Ascending aorta (tissue), 2 donors: ENCODE measurements at regions of chr10 and their contacts with region 1.

Region 1: DNA sequence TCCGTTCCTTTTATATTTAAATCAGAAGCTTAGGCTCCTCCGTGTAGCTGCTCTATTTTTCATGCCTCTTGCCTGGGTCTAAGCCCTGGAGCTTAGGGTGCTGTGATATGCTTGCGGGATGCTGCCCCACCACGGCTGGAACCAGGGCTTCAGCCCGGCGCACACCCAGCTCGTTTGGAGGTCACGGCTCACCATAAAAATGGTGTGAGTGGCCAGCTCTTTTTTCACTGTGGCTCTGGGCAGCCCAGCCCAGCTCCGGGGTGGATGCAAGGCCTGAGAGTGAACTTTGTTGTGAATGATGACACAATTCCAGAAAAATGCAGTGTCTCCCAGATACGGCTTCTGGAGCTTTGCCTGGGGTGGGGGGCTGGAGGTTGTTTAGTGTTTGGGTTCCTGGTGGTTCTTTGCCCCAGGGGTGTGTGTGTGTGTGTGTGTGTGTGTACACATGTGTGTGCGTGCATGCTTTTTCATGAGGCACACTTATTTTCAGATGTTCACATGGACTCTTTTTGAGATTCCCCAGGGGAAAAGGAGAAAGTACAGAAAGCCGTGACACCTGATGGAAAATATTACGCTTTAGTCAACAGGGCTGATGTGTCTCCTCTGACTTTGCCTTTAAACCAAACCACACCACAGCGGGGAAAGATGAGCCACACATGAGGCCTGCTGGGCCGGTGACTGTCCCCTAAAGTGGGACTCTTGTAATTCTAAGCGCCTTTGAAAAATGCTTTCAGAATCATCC is 46.2 kb downstream of the GRK5 start:
- DNase-seq: peak; percentile 47 to 90
- H3K4me3 ChIP-seq: peak overlapping the region in 1 of 2 donors; percentile 33
- H3K27ac ChIP-seq: peak overlapping the region; percentile 95 to 97
- H3K4me1 ChIP-seq: peaks cover 27 to 64% of the 10 kb centered on the region in 2 donors
- H3K27me3 ChIP-seq: no peaks in the 10 kb centered on the region
- CTCF ChIP-seq: peak in 2 of 3 experiments; percentile 14 to 17

Region 2: GRCh38 chr10:119270762-119271366 is 17.3 kb after region 1 on chr10:
- intact Hi-C with region 1: loop called (anchors 2 kb)
- DNase-seq: peak in 1 of 2 donors; percentile 90
- H3K4me3 ChIP-seq: peak overlapping the region in 1 of 2 donors; percentile 47
- H3K27ac ChIP-seq: peak overlapping the region; percentile 76 to 90
- H3K4me1 ChIP-seq: peaks cover 24 to 35% of the 10 kb centered on the region in 2 donors
- H3K27me3 ChIP-seq: no peaks in the 10 kb centered on the region
- CTCF ChIP-seq: no peak

Region 3: DNA sequence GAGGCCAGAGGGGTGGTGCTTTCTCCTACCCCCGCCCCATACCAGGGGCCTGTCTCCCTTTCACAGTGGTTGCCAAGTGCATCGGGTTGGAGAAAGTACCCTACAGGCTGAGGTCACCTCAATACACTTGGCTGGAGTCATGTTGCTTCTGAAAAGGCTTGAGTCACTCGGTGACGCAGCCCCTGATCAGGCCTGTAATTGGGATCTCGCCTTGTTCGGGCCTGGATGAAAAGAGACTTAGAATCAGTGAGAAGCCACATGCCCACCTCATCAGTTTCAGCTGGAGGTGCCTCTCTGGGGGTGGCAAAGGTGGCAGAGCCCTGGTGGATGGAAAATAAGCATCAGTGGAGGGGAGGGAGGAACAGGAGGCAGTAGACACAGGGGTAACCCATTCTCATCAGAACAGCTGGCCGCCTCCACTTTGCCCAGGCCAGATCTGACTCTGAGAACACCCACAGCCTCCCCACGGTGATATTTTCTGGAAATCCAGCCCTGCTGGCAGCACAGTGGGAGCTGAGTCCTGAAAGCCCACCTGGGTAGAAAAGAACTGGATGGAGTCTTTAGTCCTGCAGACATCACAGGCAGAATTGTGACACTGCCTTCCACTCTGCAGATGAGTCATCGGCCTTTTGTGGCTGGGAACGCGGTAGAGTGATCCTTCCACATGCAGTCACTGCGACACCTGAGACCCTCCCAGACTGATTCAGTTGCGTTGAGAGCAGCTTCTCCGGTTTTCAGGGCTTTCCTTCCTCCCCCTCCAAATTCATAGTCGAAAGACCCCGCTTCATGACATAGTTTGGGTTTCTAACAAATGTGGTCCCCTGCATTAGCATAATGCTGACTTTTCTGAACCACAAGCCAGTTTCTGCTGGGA is 61.8 kb after region 1 on chr10:
- intact Hi-C with region 1: loop called (anchors 1 kb)
- DNase-seq: peak; percentile 75 to 95
- H3K4me3 ChIP-seq: no peak overlapping the region
- H3K27ac ChIP-seq: peak overlapping the region; percentile 86 to 95
- H3K4me1 ChIP-seq: peaks cover 33 to 87% of the 10 kb centered on the region in 2 donors
- H3K27me3 ChIP-seq: no peaks in the 10 kb centered on the region
- CTCF ChIP-seq: no peak

Region 4: GRCh38 chr10:119370111-119370741 is 116.6 kb after region 1 on chr10:
- intact Hi-C with region 1: loop called (anchors 5 kb)
- DNase-seq: peak in 1 of 2 donors; percentile 83
- H3K4me3 ChIP-seq: peak overlapping the region; percentile 17 to 44
- H3K27ac ChIP-seq: peak overlapping the region; percentile 64 to 81
- H3K4me1 ChIP-seq: peaks cover 33 to 57% of the 10 kb centered on the region in 2 donors
- H3K27me3 ChIP-seq: no peaks in the 10 kb centered on the region
- CTCF ChIP-seq: no peak

Region 5: DNA sequence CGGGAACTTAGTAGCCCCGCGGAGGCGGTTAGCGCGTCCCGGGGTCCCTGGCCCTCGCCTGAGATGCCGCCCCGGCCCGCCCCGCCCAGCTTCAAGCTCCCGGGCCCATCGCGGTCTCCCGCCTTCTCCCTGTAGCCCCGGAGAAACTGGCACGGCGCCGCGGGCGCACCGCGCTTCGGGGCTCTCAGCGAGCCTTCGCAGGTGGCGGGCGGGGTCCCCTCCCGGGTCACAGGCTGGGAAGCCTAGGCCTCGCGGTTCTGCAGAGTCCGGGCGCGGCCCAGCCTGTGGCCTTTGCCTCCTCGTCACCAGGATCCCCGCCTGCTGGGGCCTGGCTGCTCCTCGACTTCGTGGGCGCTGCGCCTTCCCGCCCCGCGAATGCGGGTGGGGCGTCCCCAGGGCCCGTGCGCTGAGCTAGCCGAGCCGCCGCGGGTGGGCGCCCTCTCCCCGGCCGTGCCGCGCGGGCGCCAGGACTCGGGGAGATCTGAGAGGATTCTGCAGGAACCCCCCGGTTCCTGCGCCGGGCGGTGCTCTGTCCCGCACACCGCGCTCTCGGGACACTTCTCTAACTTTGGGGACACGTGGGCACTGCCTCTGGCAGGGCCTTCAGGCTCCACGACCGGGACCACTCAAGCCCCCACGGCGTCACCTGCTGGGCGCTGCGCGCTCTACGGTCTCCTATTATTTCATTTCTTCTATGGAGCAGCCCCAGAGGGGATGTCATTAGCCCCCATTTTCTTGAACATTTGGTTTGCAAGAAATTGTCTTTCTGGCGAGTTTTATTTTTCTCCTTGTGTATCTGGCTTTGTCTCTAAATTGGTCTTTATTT is 289.6 kb after region 1 on chr10:
- intact Hi-C with region 1: no loop called
- DNase-seq: peak in 1 of 2 donors; percentile 71
- H3K4me3 ChIP-seq: peak overlapping the region; percentile 85 to 89
- H3K27ac ChIP-seq: peak overlapping the region; percentile 58 to 79
- H3K4me1 ChIP-seq: peaks cover 0 to 10% of the 10 kb centered on the region in 2 donors
- H3K27me3 ChIP-seq: no peaks in the 10 kb centered on the region
- CTCF ChIP-seq: peak in 2 of 3 experiments; percentile 40 to 66